Mammary epithelial cell (primary cell): ENCODE measurements at regions of chr13 and their contacts with region 1.

Region 1: GRCh38 chr13:63696055-63696454 is 2280.4 kb upstream of the PCDH20 start:
- DNase-seq: no peak
- H3K4me3 ChIP-seq: no peak overlapping the region
- H3K27ac ChIP-seq: no peak overlapping the region
- H3K4me1 ChIP-seq: no peaks in the 10 kb centered on the region
- H3K27me3 ChIP-seq: no peaks in the 10 kb centered on the region
- CTCF ChIP-seq: no peak

Region 2: GRCh38 chr13:63497601-63498000 is 198.5 kb before region 1 on chr13:
- CTCF ChIA-PET with region 1: interaction called, 12 read pairs
- dilution Hi-C with region 1: no loop called
- in situ Hi-C with region 1: no loop called
- intact Hi-C with region 1: no loop called
- DNase-seq: no peak
- H3K4me3 ChIP-seq: no peak overlapping the region
- H3K27ac ChIP-seq: no peak overlapping the region
- H3K4me1 ChIP-seq: no peaks in the 10 kb centered on the region
- H3K27me3 ChIP-seq: peaks cover 2% of the 10 kb centered on the region
- CTCF ChIP-seq: no peak

Region 3: GRCh38 chr13:63625869-63626268 is 70.2 kb before region 1 on chr13:
- CTCF ChIA-PET with region 1: no interaction called
- dilution Hi-C with region 1: loop called (anchors 5 kb)
- in situ Hi-C with region 1: no loop called
- intact Hi-C with region 1: no loop called
- DNase-seq: no peak
- H3K4me3 ChIP-seq: no peak overlapping the region
- H3K27ac ChIP-seq: no peak overlapping the region
- H3K4me1 ChIP-seq: no peaks in the 10 kb centered on the region
- H3K27me3 ChIP-seq: no peaks in the 10 kb centered on the region
- CTCF ChIP-seq: no peak